ENCODE measurements at regions of chr1 and their contacts with region 1.

Region 1: GRCh38 chr1:64846573-64847430 is 101.9 kb downstream of the RAVER2 start:
- DNase-seq: no peak
- ATAC-seq: no peak
- H3K4me3 ChIP-seq: no peak overlapping the region
- H3K27ac ChIP-seq: no peak overlapping the region
- H3K4me1 ChIP-seq: peaks cover 3% of the 10 kb centered on the region
- H3K27me3 ChIP-seq: no peaks in the 10 kb centered on the region
- CTCF ChIP-seq: no peak

Region 2: DNA sequence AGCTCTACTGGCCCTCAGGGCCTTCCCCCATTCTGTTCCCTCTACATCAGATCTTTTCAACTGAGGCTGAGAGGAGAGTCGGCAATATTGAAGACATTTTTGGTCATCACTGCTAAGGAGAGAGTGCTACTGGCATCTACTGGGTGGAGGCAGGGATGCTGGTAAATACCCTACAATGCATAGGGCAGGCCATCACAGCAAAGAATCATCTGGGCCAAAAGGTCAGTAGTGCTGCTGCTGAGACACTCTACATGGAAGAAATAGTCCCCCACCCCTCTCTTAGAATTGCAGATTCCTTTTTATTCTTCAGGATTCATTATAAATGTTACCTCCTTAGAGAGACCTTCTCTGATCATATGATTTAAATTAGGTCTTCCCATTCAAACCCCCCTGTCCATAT is 25.3 kb after region 1 on chr1:
- CTCF ChIA-PET with region 1: no interaction called
- POLR2A ChIA-PET with region 1: no interaction called
- intact Hi-C with region 1: loop called (anchors 1 kb)
- DNase-seq: no peak
- ATAC-seq: no peak
- H3K4me3 ChIP-seq: no peak overlapping the region
- H3K27ac ChIP-seq: no peak overlapping the region
- H3K4me1 ChIP-seq: no peaks in the 10 kb centered on the region
- H3K27me3 ChIP-seq: no peaks in the 10 kb centered on the region
- CTCF ChIP-seq: no peak